Activated CD4-positive, alpha-beta memory T cell treated with anti-CD3 and anti-CD28 coated beads for 36 hours (primary cell): ENCODE measurements at regions of chr12 and their contacts with region 1.

Region 1: DNA sequence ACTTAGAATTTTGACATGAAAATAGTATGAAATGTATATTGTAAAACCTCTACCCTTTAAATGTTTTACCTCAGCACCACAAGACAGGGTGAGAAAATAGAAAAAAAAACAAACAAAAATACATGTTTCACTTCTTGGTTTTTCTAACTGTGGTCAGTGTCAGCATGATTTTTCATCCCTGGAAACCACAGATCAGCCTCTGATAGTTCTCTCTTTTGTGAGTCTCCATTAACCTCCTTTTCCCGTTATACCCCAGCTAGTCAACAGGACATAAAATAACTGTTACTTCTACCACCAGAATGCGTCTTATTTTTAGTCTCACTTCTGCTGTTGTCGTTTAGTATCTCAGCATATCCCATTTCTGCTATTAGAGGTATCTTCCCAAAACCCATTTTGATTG is 48.3 kb upstream of the KCNMB4 start:
- DNase-seq: no peak
- H3K4me3 Mint-ChIP-seq: no peak overlapping the region
- H3K27ac Mint-ChIP-seq: no peak overlapping the region
- H3K4me1 Mint-ChIP-seq: peaks cover 29% of the 10 kb centered on the region
- H3K27me3 Mint-ChIP-seq: no peaks in the 10 kb centered on the region

Region 2: DNA sequence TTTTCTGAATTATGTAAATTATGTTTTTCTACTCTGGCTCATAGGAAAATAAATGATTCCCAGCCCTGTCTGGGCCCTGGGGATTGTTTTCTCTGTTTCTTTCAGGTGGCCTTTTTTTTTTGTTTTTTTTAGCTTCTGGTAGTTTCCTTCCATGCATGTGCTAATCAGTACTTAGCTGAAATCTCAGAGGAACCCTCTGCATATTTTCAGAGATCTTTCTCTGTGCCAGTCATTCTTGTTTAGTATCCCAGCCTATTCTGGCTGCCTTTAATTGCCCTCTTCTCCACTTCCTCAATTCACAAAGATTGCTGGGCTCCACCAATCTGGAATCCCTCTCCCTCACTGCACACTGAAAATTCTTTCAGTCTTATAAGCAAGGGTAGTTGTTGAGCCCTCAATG is 27.7 kb before region 1 on chr12:
- CTCF ChIA-PET with region 1: no interaction called
- POLR2A ChIA-PET with region 1: no interaction called
- intact Hi-C with region 1: no loop called
- DNase-seq: no peak
- H3K4me3 Mint-ChIP-seq: no peak overlapping the region
- H3K27ac Mint-ChIP-seq: no peak overlapping the region
- H3K4me1 Mint-ChIP-seq: peaks cover 52% of the 10 kb centered on the region
- H3K27me3 Mint-ChIP-seq: no peaks in the 10 kb centered on the region

Region 3: GRCh38 chr12:70365648-70366518 is 48.1 kb after region 1 on chr12 and contains the start of gene KCNMB4:
- CTCF ChIA-PET with region 1: no interaction called
- POLR2A ChIA-PET with region 1: no interaction called
- intact Hi-C with region 1: loop called (anchors 5 kb)
- DNase-seq: peak; percentile 83
- H3K4me3 Mint-ChIP-seq: peak within 1 kb of the TSS; percentile 90
- H3K27ac Mint-ChIP-seq: peak within 1 kb of the TSS; percentile 51
- H3K4me1 Mint-ChIP-seq: peaks cover 18% of the 10 kb centered on the region
- H3K27me3 Mint-ChIP-seq: peaks cover 5% of the 10 kb centered on the region
- total RNA-seq, gene KCNMB4: 1.3 to 1.5 TPM

Region 4: DNA sequence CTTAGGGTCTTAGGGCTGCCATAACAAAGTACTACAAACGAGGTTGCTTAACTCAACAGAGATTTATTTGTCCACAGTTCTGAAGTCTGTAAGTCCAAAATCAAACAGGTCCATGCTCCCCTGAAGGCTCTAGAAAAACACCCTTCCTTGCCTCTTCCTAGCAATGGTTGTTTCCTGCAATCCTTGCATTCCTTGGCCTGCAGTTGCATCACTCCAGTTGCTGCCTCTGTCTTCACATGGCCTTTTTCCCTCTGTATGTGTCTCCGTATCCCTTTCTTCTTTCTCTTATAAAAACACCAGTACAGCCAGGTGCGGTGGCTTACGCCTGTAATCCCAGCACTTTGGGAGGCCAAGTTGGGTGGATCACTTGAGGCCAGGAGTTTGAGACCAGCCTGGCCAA is 65.7 kb after region 1 on chr12:
- CTCF ChIA-PET with region 1: no interaction called
- POLR2A ChIA-PET with region 1: no interaction called
- intact Hi-C with region 1: no loop called
- DNase-seq: no peak
- H3K4me3 Mint-ChIP-seq: no peak overlapping the region
- H3K27ac Mint-ChIP-seq: no peak overlapping the region
- H3K4me1 Mint-ChIP-seq: peaks cover 14% of the 10 kb centered on the region
- H3K27me3 Mint-ChIP-seq: no peaks in the 10 kb centered on the region